ENCODE measurements at regions of chrX and their contacts with region 1.

Region 1: GRCh38 chrX:39149761-39150160 is 348.5 kb downstream of the MID1IP1 start:
- DNase-seq: peak; percentile 36
- H3K4me3 ChIP-seq: no peak overlapping the region
- H3K27ac ChIP-seq: no peak overlapping the region
- H3K4me1 ChIP-seq: no peaks in the 10 kb centered on the region
- H3K27me3 ChIP-seq: no peaks in the 10 kb centered on the region
- CTCF ChIP-seq: peak in 3 of 4 experiments; percentile 48 to 60 (median 52)
- POLR2A ChIP-seq: no peak

Region 2: GRCh38 chrX:38768079-38768478 is 381.7 kb before region 1 on chrX:
- intact Hi-C with region 1: loop called (anchors 5 kb)
- DNase-seq: no peak
- H3K4me3 ChIP-seq: no peak overlapping the region
- H3K27ac ChIP-seq: no peak overlapping the region
- H3K4me1 ChIP-seq: no peaks in the 10 kb centered on the region
- H3K27me3 ChIP-seq: no peaks in the 10 kb centered on the region
- CTCF ChIP-seq: peak in 3 of 4 experiments; percentile 21 to 51 (median 38)
- POLR2A ChIP-seq: no peak

Measured in prostate gland (tissue), 2 donors.